ENCODE measurements at regions of chr14 and their contacts with region 1.

Region 1: GRCh38 chr14:100239840-100240724 is 1.1 kb downstream of the YY1 start:
- DNase-seq: peak; percentile 85
- ATAC-seq: peak; percentile 43
- H3K4me3 Mint-ChIP-seq: peak overlapping the region; percentile 93
- H3K27ac Mint-ChIP-seq: peak overlapping the region; percentile 89
- H3K4me1 Mint-ChIP-seq: peaks cover 48% of the 10 kb centered on the region
- H3K27me3 Mint-ChIP-seq: no peaks in the 10 kb centered on the region

Region 2: GRCh38 chr14:100165376-100165775 is 74.7 kb before region 1 on chr14:
- CTCF ChIA-PET with region 1: no interaction called
- POLR2A ChIA-PET with region 1: no interaction called
- DNase-seq: no peak
- ATAC-seq: no peak
- H3K4me3 Mint-ChIP-seq: no peak overlapping the region
- H3K27ac Mint-ChIP-seq: no peak overlapping the region
- H3K4me1 Mint-ChIP-seq: peaks cover 12% of the 10 kb centered on the region
- H3K27me3 Mint-ChIP-seq: peaks cover 21% of the 10 kb centered on the region

Region 3: DNA sequence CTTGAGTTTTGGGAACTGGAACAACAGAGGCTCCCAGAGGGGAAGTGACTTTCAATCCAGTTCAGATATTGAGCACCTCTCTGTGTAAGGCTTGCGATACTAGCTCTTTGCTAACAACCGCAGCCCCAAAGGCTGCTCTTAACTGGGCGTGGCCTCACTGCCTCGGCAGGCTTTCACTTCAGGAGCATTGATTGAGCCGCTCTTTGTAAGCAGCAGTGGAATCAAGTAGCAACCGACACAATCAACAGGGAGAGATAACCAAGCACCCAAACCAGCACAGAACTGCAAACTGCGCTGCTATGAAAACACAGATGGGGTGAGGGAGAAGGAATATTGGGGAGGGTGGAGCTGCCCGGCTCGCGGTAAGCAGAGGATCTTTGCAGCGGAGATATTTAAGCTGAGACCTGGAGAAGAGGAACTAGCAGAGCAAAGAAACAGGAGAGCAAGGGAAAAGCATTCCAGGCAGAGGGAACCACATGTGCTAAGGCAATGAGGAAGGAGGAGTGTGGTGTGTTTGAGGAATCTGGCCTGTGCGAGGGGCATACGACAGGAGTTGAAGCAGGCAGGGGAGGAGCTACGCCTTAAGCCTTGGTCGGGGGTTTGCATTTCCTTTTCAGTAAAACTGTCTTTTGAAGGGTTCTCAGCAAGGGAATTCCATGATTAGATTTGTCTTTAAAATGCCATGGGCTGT is 18.4 kb before region 1 on chr14:
- CTCF ChIA-PET with region 1: interaction called, 106 read pairs
- POLR2A ChIA-PET with region 1: interaction called, 106 read pairs
- DNase-seq: peak; percentile 86
- ATAC-seq: peak; percentile 94
- H3K4me3 Mint-ChIP-seq: no peak overlapping the region
- H3K27ac Mint-ChIP-seq: no peak overlapping the region
- H3K4me1 Mint-ChIP-seq: peaks cover 16% of the 10 kb centered on the region
- H3K27me3 Mint-ChIP-seq: no peaks in the 10 kb centered on the region

Region 4: DNA sequence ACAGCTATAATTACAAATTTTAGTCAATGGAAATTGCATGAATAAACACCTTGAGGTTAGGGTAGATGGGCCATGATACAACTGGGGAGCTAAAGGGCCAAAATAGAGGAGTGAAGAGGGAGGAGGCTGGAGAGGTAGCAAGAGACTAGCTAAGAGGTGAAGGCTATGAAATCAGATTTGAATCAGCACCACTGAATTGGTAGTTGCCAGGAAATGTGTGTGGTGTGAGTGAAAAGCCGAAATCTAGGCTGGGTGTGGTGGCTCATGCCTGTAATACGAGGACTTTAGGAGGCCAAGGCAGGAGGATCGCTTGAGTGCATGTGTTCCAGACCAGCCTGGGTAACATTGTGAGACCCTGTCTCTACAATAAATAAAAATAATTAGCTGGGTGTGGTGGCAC is 21.5 kb after region 1 on chr14:
- CTCF ChIA-PET with region 1: interaction called, 15 read pairs
- POLR2A ChIA-PET with region 1: no interaction called
- DNase-seq: peak; percentile 42
- ATAC-seq: peak; percentile 73
- H3K4me3 Mint-ChIP-seq: no peak overlapping the region
- H3K27ac Mint-ChIP-seq: peak overlapping the region; percentile 51
- H3K4me1 Mint-ChIP-seq: peaks cover 66% of the 10 kb centered on the region
- H3K27me3 Mint-ChIP-seq: no peaks in the 10 kb centered on the region